ENCODE measurements at regions of chr12 and their contacts with region 1.

Region 1: GRCh38 chr12:17192721-17193120 is 586.8 kb upstream of the LMO3 start:
- DNase-seq: no peak
- H3K4me3 Mint-ChIP-seq: no peak overlapping the region
- H3K27ac Mint-ChIP-seq: no peak overlapping the region
- H3K4me1 Mint-ChIP-seq: no peaks in the 10 kb centered on the region
- H3K27me3 Mint-ChIP-seq: no peaks in the 10 kb centered on the region

Region 2: DNA sequence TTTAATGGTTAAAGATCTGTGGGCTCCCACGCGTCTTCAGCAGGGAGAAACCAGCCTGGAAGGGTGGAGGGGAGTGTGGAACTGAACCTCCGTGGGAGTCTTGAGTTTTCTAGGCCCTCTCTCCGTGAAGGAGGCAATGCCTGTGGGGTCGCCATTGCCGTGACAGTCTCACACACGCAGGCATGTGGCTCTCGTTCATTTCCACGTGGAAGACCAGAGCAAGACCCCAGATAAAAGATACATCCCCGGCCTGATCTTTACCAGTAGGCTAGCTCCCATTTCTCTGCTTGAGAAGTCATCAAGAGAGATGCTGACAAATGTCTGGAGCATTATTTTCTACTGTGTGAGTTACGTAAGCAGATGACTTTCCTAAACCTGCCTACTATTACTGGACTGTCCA is 95.0 kb before region 1 on chr12:
- CTCF ChIA-PET with region 1: no interaction called
- POLR2A ChIA-PET with region 1: no interaction called
- intact Hi-C with region 1: no loop called
- DNase-seq: no peak
- H3K4me3 Mint-ChIP-seq: no peak overlapping the region
- H3K27ac Mint-ChIP-seq: no peak overlapping the region
- H3K4me1 Mint-ChIP-seq: no peaks in the 10 kb centered on the region
- H3K27me3 Mint-ChIP-seq: no peaks in the 10 kb centered on the region

Region 3: DNA sequence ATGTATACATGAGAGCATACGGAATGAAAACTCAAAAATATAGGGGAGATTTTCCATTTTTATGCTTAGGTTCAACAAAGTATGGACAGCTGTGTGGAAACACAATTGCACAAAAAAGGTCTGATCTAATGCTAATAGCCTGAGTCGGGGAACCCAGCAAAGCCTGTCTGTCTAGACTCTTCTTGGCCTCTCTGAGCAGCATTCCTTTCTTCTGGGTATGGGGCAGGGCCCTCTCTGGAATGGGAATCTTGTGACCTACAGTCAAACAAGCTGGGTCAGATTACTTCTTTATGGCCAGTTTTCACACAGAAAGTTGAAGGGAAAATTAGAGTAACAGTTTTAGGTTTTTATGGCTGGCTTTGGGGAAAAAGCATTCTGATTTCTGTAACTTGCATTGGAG is 52.8 kb before region 1 on chr12:
- CTCF ChIA-PET with region 1: no interaction called
- POLR2A ChIA-PET with region 1: no interaction called
- intact Hi-C with region 1: loop called (anchors 5 kb)
- DNase-seq: no peak
- H3K4me3 Mint-ChIP-seq: no peak overlapping the region
- H3K27ac Mint-ChIP-seq: no peak overlapping the region
- H3K4me1 Mint-ChIP-seq: no peaks in the 10 kb centered on the region
- H3K27me3 Mint-ChIP-seq: no peaks in the 10 kb centered on the region

Measured in activated CD4-positive, alpha-beta memory T cell treated with anti-CD3 and anti-CD28 coated beads for 36 hours (primary cell).